Activated T-helper 1 cell treated with anti-CD3 and anti-CD28 coated beads, Interleukin-12 subunit alpha, Interleukin-12 subunit beta, Interleukin-2, Interleukin-4 antibody, amounts not matched to agents 30 ng/mL and 10 ng/mL and 1 ng/mL, durations not matched to agents 14 hours and 24 hours and 36 hours (primary cell): ENCODE measurements at regions of chr19 and their contacts with region 1.

Region 1: GRCh38 chr19:58519355-58520256 is at the start of gene ZBTB45:
- DNase-seq: peak; percentile 91
- H3K4me3 Mint-ChIP-seq: peak within 1 kb of the TSS; percentile 99
- H3K27ac Mint-ChIP-seq: peak within 1 kb of the TSS; percentile 99
- H3K4me1 Mint-ChIP-seq: peaks cover 34% of the 10 kb centered on the region
- H3K27me3 Mint-ChIP-seq: peaks cover 3% of the 10 kb centered on the region
- total RNA-seq, gene ZBTB45: 15.9 and 17.4 TPM in 2 replicates

Region 2: GRCh38 chr19:58218899-58219298 is 300.7 kb before region 1 on chr19:
- intact Hi-C with region 1: loop called (anchors 2 kb)
- DNase-seq: peak; percentile 8
- H3K4me3 Mint-ChIP-seq: no peak overlapping the region
- H3K27ac Mint-ChIP-seq: no peak overlapping the region
- H3K4me1 Mint-ChIP-seq: no peaks in the 10 kb centered on the region
- H3K27me3 Mint-ChIP-seq: no peaks in the 10 kb centered on the region

Region 3: GRCh38 chr19:58409010-58409790 is 110.4 kb before region 1 on chr19:
- intact Hi-C with region 1: no loop called
- DNase-seq: no peak
- H3K4me3 Mint-ChIP-seq: peak overlapping the region; percentile 84
- H3K27ac Mint-ChIP-seq: peak overlapping the region; percentile 67
- H3K4me1 Mint-ChIP-seq: peaks cover 30% of the 10 kb centered on the region
- H3K27me3 Mint-ChIP-seq: no peaks in the 10 kb centered on the region

Region 4: DNA sequence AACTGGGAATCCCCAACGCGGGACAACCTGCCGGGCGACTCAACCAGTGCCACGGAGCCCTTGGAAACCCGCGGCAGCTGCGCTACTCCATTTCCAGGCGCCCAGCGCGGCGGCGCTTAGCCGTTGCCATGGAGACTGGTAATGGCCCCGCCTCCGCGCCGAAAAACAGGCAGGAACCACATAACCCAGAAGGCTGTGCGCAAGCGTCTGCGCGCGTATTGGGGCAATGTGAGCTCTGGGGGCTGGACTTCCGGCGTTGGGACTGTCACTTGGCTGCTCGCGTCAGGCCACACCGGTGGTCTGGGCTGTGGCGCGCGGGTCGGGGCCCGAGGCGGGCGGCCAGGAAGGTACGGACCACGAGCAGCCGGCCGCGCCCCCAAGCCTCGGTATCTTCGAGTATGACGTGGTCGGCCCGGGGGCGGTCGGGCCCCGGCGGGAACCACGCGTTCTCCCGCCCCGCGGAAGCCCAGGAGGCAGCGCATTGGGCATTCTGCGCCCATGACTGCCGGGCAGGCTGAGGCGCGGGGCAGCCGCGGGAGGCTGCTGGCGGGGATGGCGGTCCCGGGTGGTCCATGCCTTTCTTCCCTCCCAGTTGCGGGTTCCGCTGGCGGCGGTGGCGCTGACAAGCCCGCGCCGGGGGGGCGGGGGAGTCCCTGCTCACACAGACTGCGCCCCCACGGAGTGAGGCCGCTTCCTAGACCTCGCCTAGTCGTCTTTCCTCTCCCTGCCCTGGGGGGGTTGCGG is 68.1 kb before region 1 on chr19 and contains the start of gene ZNF324B:
- intact Hi-C with region 1: loop called (anchors 1 kb)
- DNase-seq: peak; percentile 95
- H3K4me3 Mint-ChIP-seq: peak within 1 kb of the TSS; percentile 85
- H3K27ac Mint-ChIP-seq: peak within 1 kb of the TSS; percentile 48
- H3K4me1 Mint-ChIP-seq: peaks cover 18% of the 10 kb centered on the region
- H3K27me3 Mint-ChIP-seq: peaks cover 7% of the 10 kb centered on the region
- total RNA-seq, gene ZNF324B: 14.3 and 15.1 TPM in 2 replicates

Region 5: GRCh38 chr19:58475714-58476497 is 43.7 kb before region 1 on chr19 and contains the start of gene ZNF446:
- intact Hi-C with region 1: loop called (anchors 1 kb)
- DNase-seq: peak; percentile 95
- H3K4me3 Mint-ChIP-seq: peak within 1 kb of the TSS; percentile 88
- H3K27ac Mint-ChIP-seq: peak within 1 kb of the TSS; percentile 99
- H3K4me1 Mint-ChIP-seq: peaks cover 25% of the 10 kb centered on the region
- H3K27me3 Mint-ChIP-seq: no peaks in the 10 kb centered on the region
- total RNA-seq, gene ZNF446: 6.6 and 6.7 TPM in 2 replicates

Region 6: DNA sequence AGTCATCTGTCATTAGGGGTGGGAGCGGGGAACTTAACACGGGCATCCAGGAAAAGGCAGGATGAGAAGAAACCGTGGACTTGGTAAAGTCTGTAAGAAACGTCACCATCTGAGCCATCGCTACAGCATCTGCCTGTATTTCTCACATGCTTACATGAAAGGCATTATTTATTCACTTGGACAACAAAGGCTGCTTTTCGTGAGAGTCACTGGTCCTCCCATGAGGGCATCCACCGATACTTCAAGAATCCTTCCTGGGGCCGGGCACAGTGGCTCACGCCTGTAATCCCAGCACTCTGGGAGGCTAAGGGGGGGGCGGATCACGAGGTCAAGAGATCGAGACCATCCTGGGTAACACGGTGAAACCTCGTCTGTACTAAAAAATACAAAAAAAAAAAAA is 27.3 kb before region 1 on chr19:
- intact Hi-C with region 1: no loop called
- DNase-seq: no peak
- H3K4me3 Mint-ChIP-seq: no peak overlapping the region
- H3K27ac Mint-ChIP-seq: no peak overlapping the region
- H3K4me1 Mint-ChIP-seq: peaks cover 16% of the 10 kb centered on the region
- H3K27me3 Mint-ChIP-seq: no peaks in the 10 kb centered on the region

Region 7: DNA sequence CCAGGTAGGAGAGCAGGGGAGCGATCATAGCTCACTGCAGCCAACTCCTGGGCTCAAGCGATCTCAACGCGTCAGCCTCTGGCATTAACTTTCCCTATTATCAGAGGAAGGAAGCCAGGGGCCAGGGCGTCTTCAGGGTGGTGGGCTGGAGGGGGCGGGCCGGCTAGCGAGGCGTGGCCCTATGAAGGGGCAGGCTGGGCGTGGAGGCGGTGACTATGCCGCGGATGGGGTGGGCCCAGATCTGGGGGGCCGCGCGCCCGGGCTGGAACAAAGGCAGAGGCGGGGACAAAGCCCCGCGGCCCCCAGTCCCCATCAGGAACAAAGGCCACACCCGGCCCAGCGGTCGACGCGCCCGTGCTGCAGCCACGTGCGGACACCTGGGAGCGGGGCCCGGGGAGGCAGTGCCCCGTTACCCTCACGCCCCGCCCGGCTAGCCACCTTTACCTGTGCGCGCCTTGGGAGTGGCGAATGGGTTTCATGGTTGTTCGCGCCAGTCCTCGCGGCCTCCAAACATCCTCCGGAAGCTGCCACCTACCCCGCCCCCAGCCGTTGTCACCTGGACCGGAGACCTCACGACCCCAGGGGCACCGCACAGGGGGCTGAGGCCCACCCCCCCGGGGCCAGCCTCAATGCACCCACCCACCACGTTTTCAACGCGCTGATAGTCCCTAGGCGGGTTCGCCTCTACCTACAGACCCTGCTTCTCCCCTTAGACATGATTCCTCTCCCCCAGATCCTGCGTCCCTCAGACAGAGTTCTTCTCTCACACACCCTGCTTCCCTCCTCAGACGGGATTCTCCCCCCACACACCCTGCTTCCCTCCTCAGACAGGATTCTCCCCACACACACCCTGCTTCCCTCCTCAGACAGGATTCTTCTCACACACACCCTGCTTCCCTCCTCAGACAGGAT is 18.9 kb after region 1 on chr19:
- intact Hi-C with region 1: loop called (anchors 1 kb)
- DNase-seq: no peak
- H3K4me3 Mint-ChIP-seq: peak overlapping the region; percentile 69
- H3K27ac Mint-ChIP-seq: peak overlapping the region; percentile 73
- H3K4me1 Mint-ChIP-seq: peaks cover 6% of the 10 kb centered on the region
- H3K27me3 Mint-ChIP-seq: peaks cover 8% of the 10 kb centered on the region

Region 8: GRCh38 chr19:58558623-58559274 is 39.1 kb after region 1 on chr19:
- intact Hi-C with region 1: loop called (anchors 1 kb)
- DNase-seq: peak; percentile 100
- H3K4me3 Mint-ChIP-seq: peak overlapping the region; percentile 95
- H3K27ac Mint-ChIP-seq: peak overlapping the region; percentile 99
- H3K4me1 Mint-ChIP-seq: peaks cover 66% of the 10 kb centered on the region
- H3K27me3 Mint-ChIP-seq: peaks cover 1% of the 10 kb centered on the region

Region 9: GRCh38 chr19:58581227-58582151 is 61.9 kb after region 1 on chr19:
- intact Hi-C with region 1: loop called (anchors 1 kb)
- DNase-seq: peak; percentile 86
- H3K4me3 Mint-ChIP-seq: no peak overlapping the region
- H3K27ac Mint-ChIP-seq: peak overlapping the region; percentile 67
- H3K4me1 Mint-ChIP-seq: peaks cover 33% of the 10 kb centered on the region
- H3K27me3 Mint-ChIP-seq: no peaks in the 10 kb centered on the region